Gastrocnemius medialis (tissue), 4 donors: ENCODE measurements at regions of chr10 and their contacts with region 1.

Region 1: DNA sequence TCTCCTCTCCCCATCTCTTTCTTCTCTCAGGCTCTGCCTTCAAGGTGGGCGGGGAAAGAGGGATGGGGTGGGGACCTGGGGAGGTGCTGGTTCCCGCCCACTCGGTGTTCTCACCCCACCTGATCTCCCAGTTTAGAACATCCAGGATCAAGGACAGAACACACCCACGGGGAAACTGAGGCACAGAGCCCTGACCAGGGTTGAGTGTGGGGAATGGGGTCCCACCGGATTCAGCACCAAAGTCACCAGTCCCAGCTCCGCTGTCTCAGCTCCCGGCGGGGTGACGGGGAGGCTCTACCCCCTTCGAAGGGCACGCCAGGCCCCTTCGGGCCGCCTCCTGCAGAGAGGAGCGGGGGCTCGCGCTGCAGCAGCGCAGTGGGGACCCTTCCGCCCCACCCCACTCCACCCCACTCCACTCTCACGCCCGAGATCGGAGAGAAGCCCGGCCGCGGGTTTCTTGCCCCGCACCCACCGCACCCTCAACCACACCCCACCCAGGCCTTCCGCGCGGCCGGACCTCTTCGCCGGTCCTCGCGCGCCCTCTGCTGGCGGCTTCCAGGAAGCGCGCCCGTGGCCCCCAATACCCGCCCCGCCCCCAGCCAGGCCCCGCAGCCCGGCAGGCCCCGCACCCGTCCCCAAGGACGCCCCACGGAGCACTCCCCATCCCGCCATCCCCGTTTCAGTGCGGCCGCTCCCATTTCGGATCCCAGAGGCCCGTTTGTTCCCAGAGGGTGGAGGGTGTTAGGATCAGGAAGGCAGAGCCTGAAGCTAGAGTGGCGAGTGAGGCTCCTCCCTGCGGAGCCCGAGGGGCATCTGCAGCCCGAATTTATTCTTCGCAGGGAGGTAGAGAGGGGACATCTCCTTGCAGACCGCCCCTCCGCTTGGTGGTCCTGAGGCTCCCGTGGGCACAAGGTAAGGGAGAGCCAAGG is 18.0 kb downstream of the POLL start:
- DNase-seq: peak; percentile 45 to 50
- ATAC-seq: peak; percentile 84 to 87
- H3K4me3 ChIP-seq: peak overlapping the region; percentile 57 to 66 (median 62)
- H3K27ac ChIP-seq: no peak overlapping the region
- H3K4me1 ChIP-seq: peaks cover 11 to 18% of the 10 kb centered on the region in 2 donors
- H3K27me3 ChIP-seq: peaks cover 32 to 46% (median 37%) of the 10 kb centered on the region in 3 donors
- CTCF ChIP-seq: peak; percentile 25 to 98 (median 91)
- POLR2A ChIP-seq: no peak

Region 2: DNA sequence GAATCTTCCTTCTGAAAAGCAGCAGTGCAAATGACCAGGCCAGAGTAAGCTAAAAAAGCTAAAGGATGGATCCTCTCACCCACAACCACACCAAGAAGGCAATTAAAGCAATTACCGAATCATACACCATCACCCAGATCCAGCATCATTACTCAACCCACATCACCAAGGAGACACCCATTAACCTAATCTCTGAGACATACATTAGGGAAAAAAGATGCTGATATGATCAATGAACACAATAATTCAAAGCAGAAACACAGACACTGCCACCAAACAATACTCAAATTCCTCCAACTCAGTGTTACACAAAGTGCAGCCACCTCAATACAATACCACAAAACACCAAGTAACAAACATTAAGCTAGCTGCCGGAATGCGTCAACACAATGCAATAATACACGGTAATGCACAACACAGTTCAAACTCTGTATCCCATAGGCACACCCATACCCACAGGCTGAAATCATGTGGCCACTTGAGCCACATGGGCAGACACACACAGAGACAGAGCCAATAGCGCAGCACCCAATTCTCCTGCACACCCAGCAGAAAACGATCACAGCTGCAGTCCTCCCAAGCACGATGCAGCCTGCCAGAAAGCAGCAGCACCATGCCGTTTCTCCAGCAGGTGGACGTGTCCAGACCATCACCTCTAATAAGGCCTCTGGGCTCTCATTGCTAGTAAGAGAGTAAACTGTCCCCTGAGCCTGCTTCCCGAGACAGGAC is 803.2 kb before region 1 on chr10:
- in situ Hi-C with region 1: no loop called
- intact Hi-C with region 1: no loop called
- DNase-seq: no peak
- ATAC-seq: no peak
- H3K4me3 ChIP-seq: no peak overlapping the region
- H3K27ac ChIP-seq: no peak overlapping the region
- H3K4me1 ChIP-seq: no peaks in the 10 kb centered on the region
- H3K27me3 ChIP-seq: peaks cover 4 to 22% (median 17%) of the 10 kb centered on the region in 3 donors
- CTCF ChIP-seq: no peak
- POLR2A ChIP-seq: no peak

Region 3: DNA sequence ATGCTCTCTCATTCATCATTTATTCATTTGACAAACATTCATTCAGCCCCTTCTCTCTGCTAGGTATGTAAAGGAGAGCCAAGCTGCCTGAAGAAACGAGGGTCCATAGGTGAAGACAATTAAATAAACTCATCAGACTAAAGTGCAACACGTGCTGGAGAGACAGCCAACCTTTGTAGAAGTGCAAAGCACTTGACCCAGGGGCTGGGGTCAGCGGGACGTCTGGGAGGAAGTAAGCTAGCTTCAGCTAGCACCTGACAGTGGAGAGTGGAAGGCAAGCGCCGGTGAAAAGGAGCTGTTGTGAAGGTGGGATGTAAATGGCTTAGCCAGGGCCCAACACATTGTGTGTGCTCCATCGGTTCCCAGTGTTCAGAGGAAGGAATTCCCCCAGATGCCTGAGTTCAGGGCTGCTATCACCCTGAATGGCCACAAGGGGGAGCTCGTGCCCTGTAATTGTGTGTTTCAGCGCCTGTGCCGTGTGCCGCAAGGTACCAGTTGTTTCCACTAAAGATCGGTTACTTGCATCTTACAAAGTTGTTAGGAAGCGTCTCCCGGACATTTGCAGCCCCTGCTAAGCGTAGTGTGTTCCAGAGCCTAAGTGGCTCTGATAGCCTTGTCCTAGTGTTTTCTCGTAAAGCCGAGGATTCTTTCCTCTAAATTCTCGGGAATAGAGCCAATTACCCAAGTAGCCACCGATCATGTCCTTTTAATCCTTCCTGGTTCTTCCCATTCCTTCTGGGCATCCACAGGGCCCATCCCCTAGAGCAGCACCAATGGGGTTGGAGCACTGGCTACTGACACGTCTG is 408.4 kb before region 1 on chr10:
- in situ Hi-C with region 1: no loop called
- intact Hi-C with region 1: loop called (anchors 2 kb)
- DNase-seq: peak; percentile 34 to 49
- ATAC-seq: peak; percentile 88 to 91
- H3K4me3 ChIP-seq: peak overlapping the region; percentile 24 to 53 (median 33)
- H3K27ac ChIP-seq: no peak overlapping the region
- H3K4me1 ChIP-seq: peaks cover 0 to 3% of the 10 kb centered on the region in 2 donors
- H3K27me3 ChIP-seq: peaks cover 10 to 35% (median 20%) of the 10 kb centered on the region in 3 donors
- CTCF ChIP-seq: peak; percentile 84 to 95 (median 86)
- POLR2A ChIP-seq: no peak

Region 4: DNA sequence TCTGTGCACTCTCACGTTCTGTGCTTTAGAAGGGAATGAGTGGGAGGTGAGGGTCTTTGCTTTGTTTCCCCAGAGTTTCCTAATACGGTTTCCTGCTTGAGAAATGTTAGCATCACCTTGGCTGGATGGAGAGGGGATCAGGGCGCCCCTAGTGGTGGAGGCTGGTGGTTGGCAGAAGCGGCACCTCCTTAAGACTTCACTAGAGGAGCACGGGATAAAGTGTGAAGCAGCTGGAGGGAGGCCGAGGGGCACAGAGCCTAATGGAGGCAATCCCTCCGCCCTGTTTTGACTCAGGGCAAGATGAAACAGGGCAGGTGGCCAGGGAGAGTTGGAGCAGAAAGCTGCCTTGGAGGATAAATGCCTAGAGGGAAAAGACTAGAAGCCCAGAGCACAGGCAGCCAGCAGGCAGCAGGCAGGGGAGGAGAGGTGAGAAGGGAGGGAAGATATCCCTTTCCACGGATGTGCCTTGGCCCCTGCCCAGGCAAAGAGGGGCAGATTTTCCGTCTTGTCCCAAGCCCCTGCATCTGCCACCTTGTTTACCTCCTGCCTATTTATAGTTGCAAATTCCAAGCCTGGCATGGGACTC is 272.1 kb before region 1 on chr10:
- in situ Hi-C with region 1: loop called in 3 of 4 experiments (anchors 10 to 25 kb)
- intact Hi-C with region 1: loop called (anchors 2 kb)
- DNase-seq: peak; percentile 38 to 55
- ATAC-seq: peak; percentile 72 to 85
- H3K4me3 ChIP-seq: no peak overlapping the region
- H3K27ac ChIP-seq: peak overlapping the region; percentile 36 to 83 (median 54)
- H3K4me1 ChIP-seq: peaks cover 4 to 20% of the 10 kb centered on the region in 2 donors
- H3K27me3 ChIP-seq: no peaks in the 10 kb centered on the region
- CTCF ChIP-seq: peak; percentile 55 to 94 (median 83)
- POLR2A ChIP-seq: no peak

Region 5: GRCh38 chr10:101467286-101467770 is 102.8 kb before region 1 on chr10:
- in situ Hi-C with region 1: no loop called
- intact Hi-C with region 1: loop called (anchors 10 kb)
- DNase-seq: peak in 1 of 2 donors; percentile 18
- ATAC-seq: peak; percentile 65 to 90
- H3K4me3 ChIP-seq: no peak overlapping the region
- H3K27ac ChIP-seq: no peak overlapping the region
- H3K4me1 ChIP-seq: peaks cover 7 to 8% of the 10 kb centered on the region in 2 donors
- H3K27me3 ChIP-seq: no peaks in the 10 kb centered on the region
- CTCF ChIP-seq: peak; percentile 58 to 83 (median 75)
- POLR2A ChIP-seq: no peak

Region 6: DNA sequence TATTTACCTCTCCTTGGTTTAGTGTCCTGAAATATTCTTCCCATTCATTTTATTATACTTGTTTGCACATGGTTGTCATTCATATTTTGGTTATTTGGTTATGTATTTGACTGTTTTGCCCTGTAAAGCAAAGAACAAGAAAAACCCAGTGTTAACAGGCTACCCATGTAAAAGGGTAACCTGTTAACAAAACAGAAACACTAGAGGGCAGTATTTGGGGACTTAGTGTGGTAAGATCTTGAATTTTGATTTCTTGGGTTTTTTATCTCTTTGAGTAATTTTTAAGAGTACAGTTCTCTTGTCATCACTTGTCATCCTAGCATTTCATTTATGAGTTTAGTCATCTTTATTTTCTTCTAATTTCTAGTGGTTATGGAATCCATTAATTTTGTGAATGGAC is 33.3 kb before region 1 on chr10:
- in situ Hi-C with region 1: no loop called
- intact Hi-C with region 1: loop called (anchors 2 kb)
- DNase-seq: no peak
- ATAC-seq: no peak
- H3K4me3 ChIP-seq: no peak overlapping the region
- H3K27ac ChIP-seq: no peak overlapping the region
- H3K4me1 ChIP-seq: no peaks in the 10 kb centered on the region
- H3K27me3 ChIP-seq: no peaks in the 10 kb centered on the region
- CTCF ChIP-seq: peak in 3 of 5 experiments; percentile 22 to 44 (median 35)
- POLR2A ChIP-seq: no peak

Region 7: GRCh38 chr10:102024799-102025198 is 454.7 kb after region 1 on chr10:
- in situ Hi-C with region 1: no loop called
- intact Hi-C with region 1: no loop called
- DNase-seq: no peak
- ATAC-seq: no peak
- H3K4me3 ChIP-seq: no peak overlapping the region
- H3K27ac ChIP-seq: no peak overlapping the region
- H3K4me1 ChIP-seq: no peaks in the 10 kb centered on the region
- H3K27me3 ChIP-seq: no peaks in the 10 kb centered on the region
- CTCF ChIP-seq: no peak
- POLR2A ChIP-seq: no peak